ENCODE measurements at regions of chr3 and their contacts with region 1.

Region 1: DNA sequence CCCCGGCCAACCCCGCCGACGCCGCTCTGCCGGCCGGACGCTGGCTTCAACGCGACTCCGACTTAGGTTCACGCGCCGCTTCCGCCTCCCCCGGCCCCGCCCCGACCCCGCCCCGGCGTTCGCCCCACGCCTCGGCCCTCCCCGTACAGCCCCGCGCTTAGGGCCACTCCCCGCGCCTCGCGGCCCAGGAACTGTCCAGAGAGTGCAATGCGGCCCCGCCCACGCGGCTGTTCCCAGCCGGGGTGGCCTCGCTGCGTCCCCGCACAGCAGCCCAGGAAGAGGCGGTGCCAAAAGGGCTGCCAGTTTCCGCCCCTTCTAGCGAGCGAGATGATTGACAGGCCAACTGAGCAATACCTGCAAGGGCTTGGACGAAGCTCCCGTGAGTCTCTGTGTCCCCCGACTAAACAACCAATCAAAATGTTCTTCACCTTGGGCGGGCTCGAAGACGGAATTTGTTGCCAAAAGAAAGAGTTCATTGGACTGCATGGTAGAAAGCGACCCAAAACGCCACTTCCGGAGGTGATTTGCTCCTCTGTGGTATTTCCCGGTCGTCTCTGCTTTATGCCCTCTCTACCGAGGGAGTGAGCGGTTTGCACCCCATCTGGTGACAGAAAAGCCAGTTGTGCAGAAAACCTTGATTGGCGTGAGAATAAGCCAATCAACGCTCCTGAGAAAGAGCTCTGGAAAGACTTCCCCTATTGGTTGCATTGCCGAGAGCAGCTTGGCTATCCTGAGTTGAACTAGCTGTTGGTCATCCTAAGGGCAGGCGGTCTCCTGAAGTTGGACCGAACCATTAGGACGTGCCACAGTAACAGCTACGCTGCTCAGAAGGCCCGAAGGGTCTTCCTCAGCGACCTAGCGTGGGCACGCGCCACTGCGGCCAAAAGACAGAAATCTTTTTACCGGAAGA is at the start of gene UBP1:
- DNase-seq: peak; percentile 100
- ATAC-seq: peak; percentile 90
- H3K4me3 ChIP-seq: peak within 1 kb of the TSS; percentile 89 to 91
- H3K27ac ChIP-seq: peak within 1 kb of the TSS; percentile 92
- H3K4me1 ChIP-seq: peaks cover 21 to 28% of the 10 kb centered on the region in 2 experiments
- H3K27me3 ChIP-seq: no peaks in the 10 kb centered on the region
- CTCF ChIP-seq: no peak
- POLR2A ChIP-seq: peak; percentile 92
- RAD21 ChIP-seq: no peak
- total RNA-seq, gene UBP1: 69.5 TPM

Region 2: DNA sequence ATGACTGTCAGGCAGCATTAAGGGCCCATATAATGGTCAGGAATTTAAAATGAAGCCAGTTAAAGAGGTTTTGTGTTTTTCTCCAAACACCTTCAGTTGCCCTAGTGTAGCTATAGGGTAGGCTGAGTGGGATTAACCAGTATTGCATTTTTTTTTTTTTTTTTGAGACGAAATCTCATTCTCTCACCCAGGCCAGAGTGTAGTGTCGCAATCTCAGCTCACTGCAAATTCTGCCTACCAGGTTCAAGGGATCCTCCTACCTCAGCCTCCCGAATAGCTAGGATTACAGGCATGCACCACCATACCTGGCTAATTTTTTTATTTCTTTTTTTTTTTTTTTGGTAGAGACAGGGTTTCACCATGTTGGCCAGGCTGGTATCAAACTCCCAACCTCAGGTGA is 270.5 kb after region 1 on chr3:
- CTCF ChIA-PET with region 1: no interaction called
- POLR2A ChIA-PET with region 1: no interaction called
- RAD21 ChIA-PET with region 1: no interaction called
- intact Hi-C with region 1: loop called (anchors 5 kb)
- DNase-seq: no peak
- ATAC-seq: no peak
- H3K4me3 ChIP-seq: no peak overlapping the region
- H3K27ac ChIP-seq: no peak overlapping the region
- H3K4me1 ChIP-seq: no peaks in the 10 kb centered on the region
- H3K27me3 ChIP-seq: no peaks in the 10 kb centered on the region
- CTCF ChIP-seq: no peak
- POLR2A ChIP-seq: no peak
- RAD21 ChIP-seq: no peak

Region 3: GRCh38 chr3:33798411-33799201 is 358.0 kb after region 1 on chr3 and contains the start of gene PDCD6IP:
- CTCF ChIA-PET with region 1: no interaction called
- POLR2A ChIA-PET with region 1: interaction called, 4 read pairs
- RAD21 ChIA-PET with region 1: no interaction called
- intact Hi-C with region 1: loop called (anchors 10 kb)
- DNase-seq: peak; percentile 87
- ATAC-seq: peak; percentile 93
- H3K4me3 ChIP-seq: peak within 1 kb of the TSS; percentile 81 to 96
- H3K27ac ChIP-seq: peak within 1 kb of the TSS; percentile 94
- H3K4me1 ChIP-seq: peaks cover 3 to 20% of the 10 kb centered on the region in 2 experiments; a peak in 3 of 4 replicates
- H3K27me3 ChIP-seq: no peaks in the 10 kb centered on the region
- CTCF ChIP-seq: no peak
- POLR2A ChIP-seq: peak; percentile 63
- RAD21 ChIP-seq: no peak
- total RNA-seq, gene PDCD6IP: 241 TPM